ENCODE measurements at regions of chr3 and their contacts with region 1.

Region 1: GRCh38 chr3:42880601-42881451 is 5.1 kb upstream of the CYP8B1 start:
- DNase-seq: peak; percentile 80 to 94 (median 86)
- ATAC-seq: peak; percentile 94 to 99 (median 98)
- H3K4me3 ChIP-seq: peak overlapping the region; percentile 44 to 76 (median 66)
- H3K27ac ChIP-seq: peak overlapping the region in 9 of 12 donors; percentile 33 to 82 (median 58)
- H3K4me1 ChIP-seq: peaks cover 0 to 11% (median 6%) of the 10 kb centered on the region in 12 donors
- H3K27me3 ChIP-seq: peaks cover 0 to 10% (median 0%) of the 10 kb centered on the region in 9 donors
- CTCF ChIP-seq: peak; percentile 82 to 97 (median 94)
- POLR2A ChIP-seq: peak in 1 of 2 donors; percentile 25

Region 2: DNA sequence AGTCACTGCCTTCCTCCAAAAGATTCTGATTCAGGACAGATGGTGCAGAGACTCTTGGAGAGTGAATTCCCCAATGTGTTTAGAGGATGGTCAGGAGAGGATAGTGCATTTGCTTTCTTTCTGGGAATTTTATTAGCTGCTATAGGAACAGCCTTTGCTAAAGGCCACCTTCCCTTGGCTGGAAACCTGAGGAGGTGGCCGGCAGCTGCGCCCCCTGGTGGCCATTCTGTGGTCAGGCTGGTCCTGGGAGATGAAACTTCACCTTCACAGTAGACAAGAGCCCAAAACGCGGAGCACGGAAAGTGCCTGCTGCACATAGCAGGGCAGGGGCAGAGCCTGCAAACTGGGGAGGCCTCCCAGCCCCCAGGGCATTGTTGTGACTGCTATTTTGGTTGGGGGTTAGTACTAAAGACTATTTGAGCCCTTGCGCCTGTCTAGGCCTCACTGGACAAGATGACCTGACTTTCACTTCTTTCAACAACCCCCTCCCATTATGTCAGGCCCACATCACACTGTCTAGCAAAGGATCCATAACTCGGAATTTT is 333.4 kb before region 1 on chr3:
- intact Hi-C with region 1: no loop called
- DNase-seq: peak; percentile 65 to 82 (median 68)
- ATAC-seq: peak; percentile 40 to 64 (median 50)
- H3K4me3 ChIP-seq: no peak overlapping the region
- H3K27ac ChIP-seq: peak overlapping the region in 5 of 12 donors; percentile 2 to 54 (median 26)
- H3K4me1 ChIP-seq: peaks cover 0 to 28% (median 8%) of the 10 kb centered on the region in 12 donors
- H3K27me3 ChIP-seq: no peaks in the 10 kb centered on the region
- CTCF ChIP-seq: peak; percentile 85 to 99 (median 94)
- POLR2A ChIP-seq: no peak

Region 3: DNA sequence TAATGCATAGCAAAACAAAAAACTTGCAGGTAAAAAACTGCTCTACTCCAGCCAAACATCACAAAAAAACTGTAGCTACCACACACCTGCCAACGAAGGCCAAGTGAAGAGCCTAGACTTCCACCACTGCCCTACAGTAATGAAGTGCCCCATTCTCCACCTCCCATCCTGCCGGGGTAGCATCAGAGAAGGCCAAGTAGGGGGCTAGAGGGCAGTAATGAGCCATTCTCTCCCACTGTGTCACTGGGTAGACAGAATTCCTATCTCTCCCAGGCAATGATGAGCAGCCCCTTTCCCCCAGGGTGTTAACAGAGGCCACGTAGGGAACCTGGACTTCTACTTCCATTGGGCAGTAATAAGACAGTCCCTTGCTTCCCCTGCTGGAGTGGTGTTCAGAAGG is 308.5 kb before region 1 on chr3:
- intact Hi-C with region 1: loop called in 1 of 10 experiments (anchors 10 kb)
- DNase-seq: no peak
- ATAC-seq: peak; percentile 66 to 83 (median 78)
- H3K4me3 ChIP-seq: no peak overlapping the region
- H3K27ac ChIP-seq: no peak overlapping the region
- H3K4me1 ChIP-seq: peaks cover 0 to 5% (median 0%) of the 10 kb centered on the region in 12 donors
- H3K27me3 ChIP-seq: no peaks in the 10 kb centered on the region
- CTCF ChIP-seq: peak in 11 of 12 donors; percentile 12 to 54 (median 34)
- POLR2A ChIP-seq: no peak

Region 4: GRCh38 chr3:42780892-42781700 is 99.7 kb before region 1 on chr3:
- intact Hi-C with region 1: loop called (anchors 1 to 5 kb)
- DNase-seq: no peak
- ATAC-seq: peak in 3 of 4 donors; percentile 59 to 72 (median 70)
- H3K4me3 ChIP-seq: no peak overlapping the region
- H3K27ac ChIP-seq: peak overlapping the region in 2 of 12 donors; percentile 12 to 63
- H3K4me1 ChIP-seq: peaks cover 0 to 11% (median 3%) of the 10 kb centered on the region in 12 donors
- H3K27me3 ChIP-seq: no peaks in the 10 kb centered on the region
- CTCF ChIP-seq: peak; percentile 69 to 84 (median 78)
- POLR2A ChIP-seq: peak in 1 of 2 donors; percentile 13

Region 5: DNA sequence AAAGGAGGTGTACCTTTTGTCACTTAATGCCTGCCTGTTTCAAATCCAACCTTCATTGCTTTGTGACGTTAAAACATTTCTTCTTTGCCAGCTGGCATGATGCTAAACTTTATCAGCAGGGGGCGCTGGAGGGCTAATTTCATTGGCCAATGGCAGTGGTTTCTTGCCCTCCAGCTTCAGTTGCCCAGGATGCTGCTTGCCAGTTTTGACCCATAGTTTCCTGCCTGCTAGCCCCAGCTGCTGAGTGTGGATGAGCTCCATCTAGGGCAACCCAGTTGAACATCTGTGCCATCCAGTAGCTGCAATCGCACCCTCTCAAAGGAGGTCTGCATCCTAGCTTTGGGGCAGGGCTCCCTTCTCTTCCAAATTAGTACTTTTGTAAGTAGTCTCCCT is 49.5 kb before region 1 on chr3:
- intact Hi-C with region 1: loop called (anchors 1 to 5 kb)
- DNase-seq: peak; percentile 53 to 74 (median 63)
- ATAC-seq: peak; percentile 29 to 66 (median 57)
- H3K4me3 ChIP-seq: no peak overlapping the region
- H3K27ac ChIP-seq: no peak overlapping the region
- H3K4me1 ChIP-seq: peaks cover 0 to 8% (median 0%) of the 10 kb centered on the region in 12 donors
- H3K27me3 ChIP-seq: no peaks in the 10 kb centered on the region
- CTCF ChIP-seq: peak; percentile 62 to 83 (median 73)
- POLR2A ChIP-seq: no peak

Region 6: GRCh38 chr3:42839616-42840015 is 41.2 kb before region 1 on chr3:
- intact Hi-C with region 1: loop called in 4 of 10 experiments (anchors 2 to 5 kb)
- DNase-seq: peak in 1 of 5 donors; percentile 46
- ATAC-seq: peak; percentile 78 to 93 (median 87)
- H3K4me3 ChIP-seq: peak overlapping the region in 2 of 12 donors; percentile 2 to 37
- H3K27ac ChIP-seq: no peak overlapping the region
- H3K4me1 ChIP-seq: peaks cover 0 to 22% (median 7%) of the 10 kb centered on the region in 12 donors
- H3K27me3 ChIP-seq: no peaks in the 10 kb centered on the region
- CTCF ChIP-seq: peak; percentile 52 to 78 (median 72)
- POLR2A ChIP-seq: no peak

Region 7: DNA sequence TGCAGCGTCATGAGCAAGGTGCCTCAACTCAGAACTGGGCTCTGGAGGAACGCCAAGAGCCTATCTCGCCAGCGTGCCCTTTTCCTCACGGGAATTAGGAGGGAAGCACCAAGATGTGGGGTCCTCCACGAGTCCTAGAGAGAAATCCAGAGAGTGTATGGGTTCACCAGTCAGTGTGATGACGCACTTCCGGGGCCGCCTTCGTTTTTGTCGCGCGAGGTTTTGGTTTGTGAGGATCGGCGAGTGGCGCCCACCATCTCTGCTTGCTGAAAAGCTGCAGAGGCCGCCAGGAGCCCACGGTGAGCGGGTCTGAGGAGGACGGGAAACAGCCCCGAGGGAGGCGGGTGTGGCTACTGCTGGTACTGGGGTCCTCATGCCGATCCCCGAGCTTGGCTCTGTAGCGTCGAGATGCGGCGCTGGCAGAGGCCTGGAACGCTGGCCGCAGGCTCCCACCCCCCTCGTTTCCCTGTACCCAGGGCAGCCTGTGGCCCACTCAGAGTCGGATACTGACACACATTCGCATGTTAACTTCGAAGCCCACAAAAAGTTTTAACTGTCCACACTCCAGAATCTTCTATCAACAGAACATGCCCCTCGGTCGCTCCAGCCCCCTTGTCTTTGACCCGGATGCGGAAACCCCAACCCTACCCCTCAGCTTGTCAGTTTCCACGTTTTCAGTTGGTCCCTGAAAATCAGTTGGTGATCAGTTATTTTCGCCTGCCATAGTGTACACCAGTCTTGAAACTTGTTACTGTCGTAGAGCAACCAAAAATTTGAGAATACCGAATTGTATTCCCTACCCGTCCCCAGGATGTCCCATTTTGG is 55.5 kb after region 1 on chr3:
- intact Hi-C with region 1: no loop called
- DNase-seq: peak; percentile 16 to 63 (median 54)
- ATAC-seq: peak in 3 of 4 donors; percentile 22 to 71 (median 50)
- H3K4me3 ChIP-seq: peak overlapping the region in 11 of 12 donors; percentile 9 to 62 (median 38)
- H3K27ac ChIP-seq: peak overlapping the region in 1 of 12 donors; percentile 44
- H3K4me1 ChIP-seq: peaks cover 0 to 6% (median 0%) of the 10 kb centered on the region in 12 donors
- H3K27me3 ChIP-seq: peaks cover 0 to 8% (median 0%) of the 10 kb centered on the region in 9 donors
- CTCF ChIP-seq: no peak
- POLR2A ChIP-seq: no peak

Region 8: GRCh38 chr3:42975456-42975855 is 94.6 kb after region 1 on chr3:
- intact Hi-C with region 1: no loop called
- DNase-seq: no peak
- ATAC-seq: no peak
- H3K4me3 ChIP-seq: no peak overlapping the region
- H3K27ac ChIP-seq: no peak overlapping the region
- H3K4me1 ChIP-seq: peaks cover 0 to 19% (median 8%) of the 10 kb centered on the region in 12 donors
- H3K27me3 ChIP-seq: peaks cover 3 to 28% (median 10%) of the 10 kb centered on the region in 9 donors
- CTCF ChIP-seq: no peak
- POLR2A ChIP-seq: no peak